PC-3 (cell line): ENCODE measurements at regions of chr1 and their contacts with region 1.

Region 1: DNA sequence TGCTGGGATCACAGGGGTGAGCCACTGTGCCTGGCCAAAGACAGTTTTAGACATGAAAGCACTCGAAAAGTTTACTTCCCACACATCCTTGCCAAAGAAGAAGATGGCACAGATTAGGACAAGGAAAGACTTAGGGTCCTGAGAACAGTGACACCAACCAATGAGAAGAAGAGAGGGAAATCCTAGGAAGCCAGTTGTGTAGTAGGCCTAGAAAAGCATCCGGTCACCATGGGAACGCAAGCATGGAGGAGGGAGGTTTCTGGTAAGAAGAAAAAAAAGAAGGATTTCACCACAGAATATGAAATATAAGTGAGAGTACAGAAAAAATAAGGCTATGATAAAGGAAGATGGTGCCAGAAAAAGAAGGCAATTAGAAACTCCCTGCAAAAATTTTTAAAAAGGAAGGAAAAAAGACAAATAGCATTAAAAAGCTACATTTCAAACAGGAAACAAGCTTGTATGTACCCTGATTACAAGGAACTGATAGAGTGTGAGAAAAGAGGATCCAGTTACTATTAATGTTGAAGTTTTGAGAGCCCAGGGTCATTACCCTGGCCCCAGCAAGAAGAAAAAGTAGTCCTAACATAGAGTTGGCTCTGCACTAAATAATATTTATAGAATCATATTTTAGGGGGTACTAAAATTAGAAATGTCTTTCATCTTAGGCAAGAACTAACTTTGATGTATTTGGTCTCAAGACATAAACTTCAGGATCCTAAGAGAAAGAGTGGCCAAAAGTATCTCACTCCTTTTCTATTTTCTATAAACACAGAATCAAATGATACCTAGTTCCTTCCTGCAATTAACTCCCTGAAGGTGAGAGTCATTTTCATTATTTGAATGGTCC is 16.1 kb downstream of the DIPK1A start:
- DNase-seq: no peak
- ATAC-seq: no peak
- H3K4me3 ChIP-seq: no peak overlapping the region
- H3K27ac ChIP-seq: no peak overlapping the region
- H3K4me1 ChIP-seq: peaks cover 12% of the 10 kb centered on the region
- H3K27me3 ChIP-seq: no peaks in the 10 kb centered on the region
- CTCF ChIP-seq: no peak

Region 2: GRCh38 chr1:92886886-92887419 is 58.2 kb before region 1 on chr1:
- CTCF ChIA-PET with region 1: no interaction called
- POLR2A ChIA-PET with region 1: interaction called, 10 read pairs
- intact Hi-C with region 1: no loop called
- DNase-seq: peak; percentile 72
- ATAC-seq: peak; percentile 66
- H3K4me3 ChIP-seq: no peak overlapping the region
- H3K27ac ChIP-seq: peak overlapping the region; percentile 36; the same call in 1 of the 2 replicates
- H3K4me1 ChIP-seq: peaks cover 16% of the 10 kb centered on the region
- H3K27me3 ChIP-seq: no peaks in the 10 kb centered on the region
- CTCF ChIP-seq: no peak